Posterior cingulate gyrus (tissue), 11 donors: ENCODE measurements at regions of chr3 and their contacts with region 1.

Region 1: DNA sequence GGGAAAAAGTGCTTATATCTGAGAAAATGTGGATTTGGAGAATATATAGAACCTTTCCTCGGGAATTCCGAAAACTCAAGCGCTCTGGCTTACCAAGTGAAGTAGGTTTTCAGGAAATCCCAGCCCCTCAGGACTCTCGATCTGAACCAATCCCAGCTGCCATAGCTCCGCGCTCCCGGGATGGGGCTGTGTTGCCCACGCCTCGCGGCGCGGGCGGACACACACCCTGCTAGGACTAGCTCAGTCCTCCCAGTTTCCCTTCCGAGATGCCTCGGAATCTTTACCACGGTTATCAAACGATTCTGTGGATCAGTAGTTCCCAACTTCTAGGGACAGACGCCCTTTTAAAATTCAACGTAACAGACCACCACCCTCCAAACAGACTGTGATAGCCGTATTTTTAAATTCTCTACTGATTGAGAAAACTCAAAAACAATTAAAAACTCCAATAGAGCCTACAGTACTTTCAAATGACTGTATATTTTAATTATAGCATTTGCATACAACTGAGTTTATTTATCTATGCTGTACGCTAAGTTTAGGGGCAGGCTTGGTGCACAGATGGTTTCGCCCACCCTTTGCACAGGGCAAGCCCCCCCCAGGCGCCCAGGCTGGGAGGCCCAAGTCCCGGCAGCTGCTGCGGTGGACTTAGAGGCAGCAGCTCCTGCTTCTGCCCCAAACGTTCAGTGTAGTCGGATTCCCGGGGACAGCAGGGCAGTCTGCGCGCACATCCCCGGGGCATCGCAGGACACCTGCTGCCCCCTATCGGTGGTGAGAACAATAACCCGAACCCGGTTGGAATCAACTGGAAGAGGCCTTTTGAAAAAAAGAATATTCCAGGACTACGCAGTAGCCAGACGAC is 52.3 kb downstream of the CCDC54 start:
- DNase-seq: peak; percentile 66 to 98 (median 80)

Region 2: GRCh38 chr3:107522510-107523288 is 93.1 kb after region 1 on chr3 and contains the start of gene BBX:
- intact Hi-C with region 1: loop called (anchors 1 kb)
- DNase-seq: peak; percentile 85 to 99 (median 92)

Region 3: DNA sequence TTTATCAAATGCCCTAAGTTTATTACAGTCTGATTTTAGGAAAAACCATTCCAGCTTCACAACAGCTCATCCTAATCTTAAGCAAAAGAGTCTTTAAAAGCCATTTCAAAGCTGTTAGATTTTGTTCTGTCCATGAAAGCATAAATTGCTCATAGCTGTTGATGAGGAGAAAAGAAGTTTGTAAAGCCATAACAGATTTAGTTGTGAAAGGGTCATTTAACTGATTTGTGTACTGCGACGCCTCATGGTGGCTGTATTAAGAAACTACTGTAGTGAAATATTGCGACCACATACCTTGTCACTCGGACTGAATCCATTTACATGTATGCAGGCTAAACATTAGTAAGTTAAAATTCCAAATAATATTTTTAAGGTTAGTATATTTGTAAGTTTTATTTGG is 114.1 kb after region 1 on chr3:
- intact Hi-C with region 1: loop called (anchors 5 kb)
- DNase-seq: peak in 1 of 10 donors; percentile 33

Region 4: DNA sequence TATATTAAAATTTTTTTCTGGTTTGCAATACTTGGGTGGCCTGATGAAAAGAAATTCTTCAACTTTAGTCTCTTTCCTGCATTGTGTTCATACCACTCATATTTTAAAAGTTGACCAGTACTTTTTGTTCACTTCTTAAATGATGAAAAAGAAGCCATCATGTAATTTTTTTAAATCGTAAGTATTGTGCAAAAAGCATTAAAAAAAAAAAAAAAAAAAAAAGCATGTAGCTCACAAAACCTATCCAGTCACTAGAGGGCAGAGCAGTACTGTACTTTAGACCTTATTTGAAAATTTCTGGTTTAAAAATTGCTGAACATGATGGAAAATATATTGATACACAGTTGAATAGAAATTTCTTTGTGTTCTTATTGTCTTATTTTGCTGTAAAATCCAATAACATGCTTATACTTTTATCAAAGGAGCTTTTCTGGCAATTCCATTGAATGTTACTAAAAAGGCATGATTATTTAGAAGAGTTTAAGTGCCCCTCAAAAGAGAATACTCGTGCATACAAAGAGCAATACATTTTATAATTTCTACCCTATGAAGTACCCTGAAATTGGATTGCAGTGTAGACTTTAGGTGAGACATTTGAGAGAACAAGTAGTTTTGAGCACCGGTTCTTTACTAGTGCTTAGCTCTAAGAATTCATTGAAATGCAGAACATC is 230.9 kb after region 1 on chr3:
- intact Hi-C with region 1: loop called (anchors 10 kb)
- DNase-seq: no peak

Region 5: GRCh38 chr3:107884719-107885460 is 455.3 kb after region 1 on chr3:
- intact Hi-C with region 1: no loop called
- DNase-seq: no peak